Activated CD4-positive, alpha-beta T cell treated with anti-CD3 and anti-CD28 coated beads for 36 hours (primary cell): ENCODE measurements at regions of chr18 and their contacts with region 1.

Region 1: DNA sequence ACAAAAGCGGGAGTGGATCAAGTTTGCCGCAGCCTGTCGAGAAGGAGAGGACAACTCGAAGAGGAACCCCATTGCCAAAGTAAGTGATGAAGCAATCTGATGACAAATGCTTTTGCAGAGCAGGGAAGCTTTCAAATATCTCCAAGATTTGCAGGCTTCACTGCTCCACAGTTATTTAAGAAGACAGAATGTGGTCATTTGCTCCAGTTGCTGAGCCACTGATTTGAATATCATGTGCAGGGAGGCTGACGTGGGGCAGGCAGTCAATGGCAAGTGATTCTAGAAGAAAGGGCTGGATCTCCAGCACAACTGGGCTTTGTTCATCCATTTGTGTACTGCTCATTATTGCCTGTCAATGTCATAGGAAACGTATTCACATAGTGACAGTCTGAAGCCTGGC is 10.2 kb downstream of the DSG4 start:
- DNase-seq: no peak
- ATAC-seq: no peak
- H3K4me3 Mint-ChIP-seq: no peak overlapping the region
- H3K27ac Mint-ChIP-seq: no peak overlapping the region
- H3K4me1 Mint-ChIP-seq: no peaks in the 10 kb centered on the region
- H3K27me3 Mint-ChIP-seq: no peaks in the 10 kb centered on the region

Region 2: GRCh38 chr18:31278609-31279071 is 108.1 kb before region 1 on chr18:
- CTCF ChIA-PET with region 1: no interaction called
- POLR2A ChIA-PET with region 1: no interaction called
- intact Hi-C with region 1: no loop called
- DNase-seq: no peak
- ATAC-seq: no peak
- H3K4me3 Mint-ChIP-seq: no peak overlapping the region
- H3K27ac Mint-ChIP-seq: no peak overlapping the region
- H3K4me1 Mint-ChIP-seq: no peaks in the 10 kb centered on the region
- H3K27me3 Mint-ChIP-seq: no peaks in the 10 kb centered on the region

Region 3: DNA sequence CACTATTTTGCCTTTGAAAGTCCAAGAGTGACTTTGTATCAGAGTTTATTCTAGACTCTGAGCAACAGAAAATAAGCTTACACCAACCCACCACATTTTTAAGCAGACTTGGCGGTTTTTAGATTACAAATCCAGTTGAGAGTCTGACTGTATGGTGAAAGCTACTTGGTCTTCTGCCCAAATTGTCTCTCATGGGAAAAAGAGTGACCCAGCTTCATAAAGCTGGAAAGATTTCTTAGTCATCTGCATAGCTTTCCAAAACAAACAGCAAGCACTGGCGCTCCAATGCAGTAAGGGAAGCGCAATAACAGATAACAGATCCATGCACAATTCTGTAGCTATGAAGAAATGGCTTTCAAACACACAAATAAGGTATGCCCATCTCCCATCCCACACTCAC is 61.7 kb before region 1 on chr18:
- CTCF ChIA-PET with region 1: no interaction called
- POLR2A ChIA-PET with region 1: no interaction called
- intact Hi-C with region 1: loop called in 1 of 2 experiments (anchors 10 kb)
- DNase-seq: no peak
- ATAC-seq: no peak
- H3K4me3 Mint-ChIP-seq: no peak overlapping the region
- H3K27ac Mint-ChIP-seq: no peak overlapping the region
- H3K4me1 Mint-ChIP-seq: no peaks in the 10 kb centered on the region
- H3K27me3 Mint-ChIP-seq: no peaks in the 10 kb centered on the region

Region 4: GRCh38 chr18:31438402-31438801 is 51.7 kb after region 1 on chr18:
- CTCF ChIA-PET with region 1: no interaction called
- POLR2A ChIA-PET with region 1: no interaction called
- intact Hi-C with region 1: no loop called
- DNase-seq: peak; percentile 8
- ATAC-seq: no peak
- H3K4me3 Mint-ChIP-seq: no peak overlapping the region
- H3K27ac Mint-ChIP-seq: no peak overlapping the region
- H3K4me1 Mint-ChIP-seq: no peaks in the 10 kb centered on the region
- H3K27me3 Mint-ChIP-seq: no peaks in the 10 kb centered on the region